ENCODE measurements at regions of chr10 and their contacts with region 1.

Region 1: GRCh38 chr10:123021517-123021916 is 12.7 kb downstream of the ACADSB start:
- DNase-seq: no peak
- ATAC-seq: no peak
- H3K4me3 Mint-ChIP-seq: no peak overlapping the region
- H3K27ac Mint-ChIP-seq: no peak overlapping the region
- H3K4me1 Mint-ChIP-seq: peaks cover 4% of the 10 kb centered on the region
- H3K27me3 Mint-ChIP-seq: no peaks in the 10 kb centered on the region

Region 2: DNA sequence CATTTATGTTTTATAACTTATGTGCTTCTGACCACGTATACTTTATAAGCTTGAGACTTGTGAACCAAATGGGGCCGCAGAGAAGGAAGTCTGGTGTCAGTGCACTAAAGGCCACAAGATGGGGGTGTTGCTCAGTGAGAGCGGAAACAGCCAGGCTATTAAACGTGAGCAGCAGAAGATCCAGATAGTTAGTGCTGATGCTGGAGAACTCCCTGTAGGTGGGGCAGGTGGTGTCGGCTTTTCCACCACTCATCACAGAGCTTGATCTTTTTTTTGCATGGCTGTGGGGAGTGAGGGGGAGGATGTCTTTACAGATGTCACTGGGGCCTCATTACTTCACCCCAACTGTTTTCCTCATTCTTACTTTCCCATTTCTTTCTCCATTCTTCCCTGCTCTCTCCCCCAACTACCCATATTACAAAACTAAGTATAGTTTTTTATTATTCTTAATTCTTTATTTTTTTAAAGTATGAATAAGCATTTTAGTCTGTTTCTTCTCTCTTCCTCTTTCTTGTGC is 21.9 kb after region 1 on chr10:
- CTCF ChIA-PET with region 1: interaction called, 26 read pairs
- POLR2A ChIA-PET with region 1: no interaction called
- DNase-seq: peak; percentile 66
- ATAC-seq: peak; percentile 88
- H3K4me3 Mint-ChIP-seq: no peak overlapping the region
- H3K27ac Mint-ChIP-seq: no peak overlapping the region
- H3K4me1 Mint-ChIP-seq: peaks cover 11% of the 10 kb centered on the region
- H3K27me3 Mint-ChIP-seq: no peaks in the 10 kb centered on the region